Spleen (tissue), 13 donors: ENCODE measurements at regions of chr12 and their contacts with region 1.

Region 1: GRCh38 chr12:93982771-93983315 is 165.5 kb upstream of the PLXNC1 start:
- DNase-seq: no peak
- H3K4me3 ChIP-seq: no peak overlapping the region
- H3K27ac ChIP-seq: no peak overlapping the region
- H3K4me1 ChIP-seq: no peaks in the 10 kb centered on the region
- H3K27me3 ChIP-seq: peaks cover 0 to 4% (median 0%) of the 10 kb centered on the region in 7 donors
- CTCF ChIP-seq: no peak
- POLR2A ChIP-seq: no peak

Region 2: GRCh38 chr12:93502802-93503623 is 479.8 kb before region 1 on chr12:
- intact Hi-C with region 1: loop called (anchors 10 kb)
- DNase-seq: no peak
- H3K4me3 ChIP-seq: no peak overlapping the region
- H3K27ac ChIP-seq: no peak overlapping the region
- H3K4me1 ChIP-seq: peaks cover 0 to 5% (median 0%) of the 10 kb centered on the region in 6 donors
- H3K27me3 ChIP-seq: no peaks in the 10 kb centered on the region
- CTCF ChIP-seq: peak in 10 of 11 experiments; percentile 48 to 75 (median 65)
- POLR2A ChIP-seq: no peak

Region 3: GRCh38 chr12:94326727-94327126 is 343.9 kb after region 1 on chr12:
- intact Hi-C with region 1: no loop called
- DNase-seq: no peak
- H3K4me3 ChIP-seq: no peak overlapping the region
- H3K27ac ChIP-seq: no peak overlapping the region
- H3K4me1 ChIP-seq: no peaks in the 10 kb centered on the region
- H3K27me3 ChIP-seq: no peaks in the 10 kb centered on the region
- CTCF ChIP-seq: no peak
- POLR2A ChIP-seq: no peak